Breast epithelium (tissue), 4 donors: ENCODE measurements at regions of chr11 and their contacts with region 1.

Region 1: GRCh38 chr11:107609400-107610218 is 18.7 kb downstream of the ELMOD1 start:
- DNase-seq: no peak
- H3K4me3 ChIP-seq: no peak overlapping the region
- H3K27ac ChIP-seq: no peak overlapping the region
- H3K4me1 ChIP-seq: no peaks in the 10 kb centered on the region
- H3K27me3 ChIP-seq: peaks cover 0 to 7% of the 10 kb centered on the region in 2 donors
- CTCF ChIP-seq: no peak
- POLR2A ChIP-seq: no peak

Region 2: GRCh38 chr11:106988151-106989077 is 621.2 kb before region 1 on chr11:
- intact Hi-C with region 1: loop called (anchors 5 kb)
- DNase-seq: no peak
- H3K4me3 ChIP-seq: no peak overlapping the region
- H3K27ac ChIP-seq: peak overlapping the region in 1 of 2 donors; percentile 41
- H3K4me1 ChIP-seq: no peaks in the 10 kb centered on the region
- H3K27me3 ChIP-seq: no peaks in the 10 kb centered on the region
- CTCF ChIP-seq: no peak
- POLR2A ChIP-seq: no peak

Region 3: GRCh38 chr11:107661656-107662055 is 52.0 kb after region 1 on chr11:
- intact Hi-C with region 1: loop called (anchors 2 kb)
- DNase-seq: no peak
- H3K4me3 ChIP-seq: no peak overlapping the region
- H3K27ac ChIP-seq: no peak overlapping the region
- H3K4me1 ChIP-seq: no peaks in the 10 kb centered on the region
- H3K27me3 ChIP-seq: no peaks in the 10 kb centered on the region
- CTCF ChIP-seq: no peak
- POLR2A ChIP-seq: no peak